ENCODE measurements at regions of chr1 and their contacts with region 1.

Region 1: GRCh38 chr1:237961754-237962153 is 71.0 kb upstream of the ZP4 start:
- DNase-seq: no peak
- ATAC-seq: no peak
- H3K4me3 ChIP-seq: no peak overlapping the region
- H3K27ac ChIP-seq: no peak overlapping the region
- H3K4me1 ChIP-seq: no peaks in the 10 kb centered on the region
- H3K27me3 ChIP-seq: no peaks in the 10 kb centered on the region
- CTCF ChIP-seq: no peak

Region 2: GRCh38 chr1:237976331-237976730 is 14.6 kb after region 1 on chr1:
- CTCF ChIA-PET with region 1: interaction called, 11 read pairs
- POLR2A ChIA-PET with region 1: no interaction called
- in situ Hi-C with region 1: no loop called
- intact Hi-C with region 1: no loop called
- DNase-seq: no peak
- ATAC-seq: no peak
- H3K4me3 ChIP-seq: no peak overlapping the region
- H3K27ac ChIP-seq: no peak overlapping the region
- H3K4me1 ChIP-seq: no peaks in the 10 kb centered on the region
- H3K27me3 ChIP-seq: no peaks in the 10 kb centered on the region
- CTCF ChIP-seq: no peak